Activated CD4-positive, alpha-beta T cell treated with anti-CD3 and anti-CD28 coated beads for 36 hours (primary cell): ENCODE measurements at regions of chr13 and their contacts with region 1.

Region 1: DNA sequence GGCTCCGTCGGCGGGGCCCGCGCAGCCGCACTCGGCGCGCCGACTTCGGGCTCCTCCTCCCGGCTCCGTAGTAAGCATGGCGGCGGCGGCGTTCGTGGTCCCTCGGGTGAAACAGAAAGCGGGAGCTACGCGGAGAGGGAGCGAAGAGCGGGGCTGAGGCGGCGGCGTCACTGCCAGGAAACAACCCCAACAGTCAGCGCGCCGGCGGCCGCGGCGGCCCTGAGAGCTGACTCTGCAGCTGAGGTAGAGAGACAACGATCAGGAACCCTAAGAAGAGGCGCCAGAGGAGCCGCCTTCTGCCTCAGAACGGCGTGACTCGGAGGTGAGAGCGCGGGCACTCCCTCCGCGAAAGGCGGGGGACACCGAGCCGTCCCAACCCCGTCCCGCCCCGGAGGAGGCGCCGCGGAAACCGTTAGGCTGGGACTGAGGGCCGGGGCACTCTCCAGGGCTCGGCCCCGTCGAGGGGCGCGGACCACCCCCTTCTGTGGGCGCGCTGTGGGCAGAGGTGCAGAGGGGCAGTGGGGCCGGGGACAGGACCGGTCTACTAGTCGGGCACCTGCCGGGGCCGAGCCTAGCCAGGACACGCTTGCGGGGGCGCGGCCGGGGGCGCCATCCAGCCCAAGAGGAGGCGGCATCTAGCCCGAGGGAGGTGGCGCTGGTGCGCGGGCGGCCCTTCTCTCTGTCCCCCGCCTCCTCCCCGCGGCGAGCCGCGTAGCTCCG is at the start of gene FNDC3A:
- DNase-seq: peak; percentile 95
- ATAC-seq: peak; percentile 78
- H3K4me3 Mint-ChIP-seq: peak within 1 kb of the TSS; percentile 91
- H3K27ac Mint-ChIP-seq: peak within 1 kb of the TSS; percentile 98
- H3K4me1 Mint-ChIP-seq: peaks cover 34% of the 10 kb centered on the region
- H3K27me3 Mint-ChIP-seq: no peaks in the 10 kb centered on the region
- total RNA-seq, gene FNDC3A: 20.8 to 26.9 TPM

Region 2: GRCh38 chr13:48037346-48038173 is 938.5 kb before region 1 on chr13 and contains the start of gene NUDT15:
- CTCF ChIA-PET with region 1: no interaction called
- POLR2A ChIA-PET with region 1: no interaction called
- intact Hi-C with region 1: loop called in 1 of 2 experiments (anchors 5 kb)
- DNase-seq: peak; percentile 98
- ATAC-seq: peak; percentile 89
- H3K4me3 Mint-ChIP-seq: peak within 1 kb of the TSS; percentile 97
- H3K27ac Mint-ChIP-seq: peak within 1 kb of the TSS; percentile 96
- H3K4me1 Mint-ChIP-seq: peaks cover 34% of the 10 kb centered on the region
- H3K27me3 Mint-ChIP-seq: no peaks in the 10 kb centered on the region
- total RNA-seq, gene NUDT15: 12.3 to 18.2 TPM

Region 3: GRCh38 chr13:48303359-48304142 is 672.5 kb before region 1 on chr13 and contains the start of gene RB1:
- CTCF ChIA-PET with region 1: no interaction called
- POLR2A ChIA-PET with region 1: interaction called, 3 read pairs
- intact Hi-C with region 1: loop called in 1 of 2 experiments (anchors 5 kb)
- DNase-seq: peak; percentile 94
- ATAC-seq: peak; percentile 81
- H3K4me3 Mint-ChIP-seq: peak within 1 kb of the TSS; percentile 81
- H3K27ac Mint-ChIP-seq: peak within 1 kb of the TSS; percentile 99
- H3K4me1 Mint-ChIP-seq: peaks cover 27% of the 10 kb centered on the region
- H3K27me3 Mint-ChIP-seq: no peaks in the 10 kb centered on the region
- total RNA-seq, gene RB1: 26.9 to 32.8 TPM

Region 4: DNA sequence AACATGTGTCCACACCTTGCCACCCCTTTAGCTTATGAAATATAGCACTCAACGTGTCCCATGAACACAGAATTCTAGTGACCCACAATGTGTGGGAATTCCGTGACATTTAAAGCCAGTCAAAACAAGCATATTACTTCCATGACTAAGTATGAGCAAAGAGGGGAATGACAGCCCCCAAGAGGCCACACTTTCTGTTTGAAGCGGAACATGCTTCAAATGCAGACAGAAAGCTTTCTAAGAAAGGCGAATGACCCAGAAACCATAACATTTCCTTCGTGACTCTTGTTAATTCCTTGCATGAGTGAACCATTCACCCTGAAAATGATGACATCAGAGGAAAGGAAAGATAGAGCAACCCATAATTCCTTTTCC is 122.3 kb before region 1 on chr13:
- CTCF ChIA-PET with region 1: no interaction called
- POLR2A ChIA-PET with region 1: no interaction called
- intact Hi-C with region 1: loop called in 1 of 2 experiments (anchors 1 kb)
- DNase-seq: peak; percentile 50
- ATAC-seq: peak; percentile 82
- H3K4me3 Mint-ChIP-seq: no peak overlapping the region
- H3K27ac Mint-ChIP-seq: no peak overlapping the region
- H3K4me1 Mint-ChIP-seq: peaks cover 45% of the 10 kb centered on the region
- H3K27me3 Mint-ChIP-seq: peaks cover 9% of the 10 kb centered on the region

Region 5: GRCh38 chr13:49023446-49023845 is 47.4 kb after region 1 on chr13:
- CTCF ChIA-PET with region 1: no interaction called
- POLR2A ChIA-PET with region 1: no interaction called
- intact Hi-C with region 1: loop called in 1 of 2 experiments (anchors 5 kb)
- DNase-seq: no peak
- ATAC-seq: no peak
- H3K4me3 Mint-ChIP-seq: no peak overlapping the region
- H3K27ac Mint-ChIP-seq: no peak overlapping the region
- H3K4me1 Mint-ChIP-seq: peaks cover 26% of the 10 kb centered on the region
- H3K27me3 Mint-ChIP-seq: no peaks in the 10 kb centered on the region

Region 6: DNA sequence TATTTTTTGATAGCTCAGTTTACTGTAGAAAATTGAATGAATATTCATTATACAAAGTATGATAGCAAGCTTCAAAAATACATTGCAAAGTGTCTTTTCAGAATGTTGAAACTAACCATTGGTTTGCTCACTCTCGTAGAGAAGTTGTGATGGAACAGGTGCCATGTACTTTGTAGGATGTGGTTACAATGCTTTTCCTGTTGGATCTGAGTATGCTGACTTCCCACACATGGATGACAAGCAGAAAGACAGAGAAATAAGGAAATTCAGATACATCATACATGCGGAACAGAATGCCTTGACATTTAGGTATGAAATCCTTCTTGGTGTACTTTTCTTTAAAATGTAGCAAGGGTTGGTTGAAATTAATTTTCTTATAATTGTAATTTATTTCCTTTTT is 302.2 kb after region 1 on chr13:
- CTCF ChIA-PET with region 1: no interaction called
- POLR2A ChIA-PET with region 1: no interaction called
- intact Hi-C with region 1: loop called in 1 of 2 experiments (anchors 5 kb)
- DNase-seq: no peak
- ATAC-seq: no peak
- H3K4me3 Mint-ChIP-seq: no peak overlapping the region
- H3K27ac Mint-ChIP-seq: no peak overlapping the region
- H3K4me1 Mint-ChIP-seq: no peaks in the 10 kb centered on the region
- H3K27me3 Mint-ChIP-seq: no peaks in the 10 kb centered on the region

Region 7: GRCh38 chr13:49792550-49793324 is 816.7 kb after region 1 on chr13 and contains the start of gene KPNA3:
- CTCF ChIA-PET with region 1: no interaction called
- POLR2A ChIA-PET with region 1: no interaction called
- intact Hi-C with region 1: loop called in 1 of 2 experiments (anchors 2 kb)
- DNase-seq: peak; percentile 98
- ATAC-seq: peak; percentile 93
- H3K4me3 Mint-ChIP-seq: peak within 1 kb of the TSS; percentile 89
- H3K27ac Mint-ChIP-seq: peak within 1 kb of the TSS; percentile 88
- H3K4me1 Mint-ChIP-seq: peaks cover 30% of the 10 kb centered on the region
- H3K27me3 Mint-ChIP-seq: peaks cover 4% of the 10 kb centered on the region
- total RNA-seq, gene KPNA3: 51.7 to 58.0 TPM